Motor neuron (in vitro differentiated cells): ENCODE measurements at regions of chr2 and their contacts with region 1.

Region 1: GRCh38 chr2:146523196-146523595 is 1321.6 kb upstream of the ACVR2A start:
- ATAC-seq: no peak
- H3K4me3 ChIP-seq: no peak overlapping the region
- H3K27ac ChIP-seq: no peak overlapping the region
- H3K4me1 ChIP-seq: no peaks in the 10 kb centered on the region

Region 2: GRCh38 chr2:146324951-146325350 is 198.2 kb before region 1 on chr2:
- in situ Hi-C with region 1: loop called in 1 of 9 experiments (anchors 25 kb)
- ATAC-seq: no peak
- H3K4me3 ChIP-seq: no peak overlapping the region
- H3K27ac ChIP-seq: no peak overlapping the region
- H3K4me1 ChIP-seq: peaks cover 0 to 2% of the 10 kb centered on the region in 2 donors